Activated naive CD4-positive, alpha-beta T cell treated with anti-CD3 and anti-CD28 coated beads for 36 hours (primary cell): ENCODE measurements at regions of chr1 and their contacts with region 1.

Region 1: GRCh38 chr1:172638885-172639831 is 19.7 kb upstream of the FASLG start:
- DNase-seq: peak; percentile 90
- H3K4me3 Mint-ChIP-seq: peak overlapping the region; percentile 42
- H3K27ac Mint-ChIP-seq: peak overlapping the region; percentile 93
- H3K4me1 Mint-ChIP-seq: peaks cover 73% of the 10 kb centered on the region
- H3K27me3 Mint-ChIP-seq: peaks cover 9% of the 10 kb centered on the region

Region 2: GRCh38 chr1:172357753-172358385 is 281.3 kb before region 1 on chr1:
- CTCF ChIA-PET with region 1: no interaction called
- intact Hi-C with region 1: loop called (anchors 1 kb)
- DNase-seq: no peak
- H3K4me3 Mint-ChIP-seq: no peak overlapping the region
- H3K27ac Mint-ChIP-seq: peak overlapping the region; percentile 55
- H3K4me1 Mint-ChIP-seq: peaks cover 64% of the 10 kb centered on the region
- H3K27me3 Mint-ChIP-seq: no peaks in the 10 kb centered on the region

Region 3: GRCh38 chr1:172609528-172609927 is 29.6 kb before region 1 on chr1:
- CTCF ChIA-PET with region 1: interaction called, 4 read pairs
- intact Hi-C with region 1: loop called (anchors 1 kb)
- DNase-seq: no peak
- H3K4me3 Mint-ChIP-seq: no peak overlapping the region
- H3K27ac Mint-ChIP-seq: no peak overlapping the region
- H3K4me1 Mint-ChIP-seq: peaks cover 2% of the 10 kb centered on the region
- H3K27me3 Mint-ChIP-seq: no peaks in the 10 kb centered on the region

Region 4: DNA sequence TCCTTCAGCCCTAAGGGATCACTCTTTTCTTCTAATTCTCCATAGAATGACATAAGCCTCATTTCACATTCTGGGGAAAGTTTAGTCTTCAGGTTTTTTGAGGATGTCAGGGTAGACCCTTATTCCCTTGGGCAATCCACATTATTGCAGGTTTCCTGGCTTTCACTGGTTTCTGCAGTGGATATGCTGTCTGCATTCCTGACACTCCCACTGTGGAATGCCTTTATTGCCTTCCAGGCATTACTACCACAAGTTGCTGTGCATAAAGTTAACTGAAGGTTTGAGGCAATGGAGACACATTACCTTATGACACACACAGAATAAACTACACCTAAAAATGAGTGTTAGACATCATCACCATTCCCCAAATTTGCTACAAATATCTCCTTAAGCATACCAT is 32.4 kb after region 1 on chr1:
- CTCF ChIA-PET with region 1: interaction called, 5 read pairs
- intact Hi-C with region 1: loop called (anchors 1 kb)
- DNase-seq: no peak
- H3K4me3 Mint-ChIP-seq: no peak overlapping the region
- H3K27ac Mint-ChIP-seq: no peak overlapping the region
- H3K4me1 Mint-ChIP-seq: peaks cover 70% of the 10 kb centered on the region
- H3K27me3 Mint-ChIP-seq: no peaks in the 10 kb centered on the region

Region 5: GRCh38 chr1:172708452-172708851 is 69.3 kb after region 1 on chr1:
- CTCF ChIA-PET with region 1: no interaction called
- intact Hi-C with region 1: loop called (anchors 1 kb)
- DNase-seq: peak; percentile 55
- H3K4me3 Mint-ChIP-seq: no peak overlapping the region
- H3K27ac Mint-ChIP-seq: no peak overlapping the region
- H3K4me1 Mint-ChIP-seq: peaks cover 24% of the 10 kb centered on the region
- H3K27me3 Mint-ChIP-seq: no peaks in the 10 kb centered on the region

Region 6: GRCh38 chr1:172870901-172871606 is 231.9 kb after region 1 on chr1:
- CTCF ChIA-PET with region 1: no interaction called
- intact Hi-C with region 1: loop called (anchors 1 kb)
- DNase-seq: no peak
- H3K4me3 Mint-ChIP-seq: no peak overlapping the region
- H3K27ac Mint-ChIP-seq: no peak overlapping the region
- H3K4me1 Mint-ChIP-seq: peaks cover 32% of the 10 kb centered on the region
- H3K27me3 Mint-ChIP-seq: peaks cover 24% of the 10 kb centered on the region

Region 7: GRCh38 chr1:173476664-173477285 is 837.6 kb after region 1 on chr1:
- CTCF ChIA-PET with region 1: no interaction called
- intact Hi-C with region 1: loop called (anchors 1 kb)
- DNase-seq: peak; percentile 86
- H3K4me3 Mint-ChIP-seq: peak overlapping the region; percentile 91
- H3K27ac Mint-ChIP-seq: peak overlapping the region; percentile 93
- H3K4me1 Mint-ChIP-seq: peaks cover 58% of the 10 kb centered on the region
- H3K27me3 Mint-ChIP-seq: no peaks in the 10 kb centered on the region